ENCODE measurements at regions of chr15 and their contacts with region 1.

Region 1: GRCh38 chr15:80309769-80310384 is 57.9 kb upstream of the CTXND1 start:
- DNase-seq: no peak
- ATAC-seq: peak in 1 of 2 donors; percentile 41

Region 2: DNA sequence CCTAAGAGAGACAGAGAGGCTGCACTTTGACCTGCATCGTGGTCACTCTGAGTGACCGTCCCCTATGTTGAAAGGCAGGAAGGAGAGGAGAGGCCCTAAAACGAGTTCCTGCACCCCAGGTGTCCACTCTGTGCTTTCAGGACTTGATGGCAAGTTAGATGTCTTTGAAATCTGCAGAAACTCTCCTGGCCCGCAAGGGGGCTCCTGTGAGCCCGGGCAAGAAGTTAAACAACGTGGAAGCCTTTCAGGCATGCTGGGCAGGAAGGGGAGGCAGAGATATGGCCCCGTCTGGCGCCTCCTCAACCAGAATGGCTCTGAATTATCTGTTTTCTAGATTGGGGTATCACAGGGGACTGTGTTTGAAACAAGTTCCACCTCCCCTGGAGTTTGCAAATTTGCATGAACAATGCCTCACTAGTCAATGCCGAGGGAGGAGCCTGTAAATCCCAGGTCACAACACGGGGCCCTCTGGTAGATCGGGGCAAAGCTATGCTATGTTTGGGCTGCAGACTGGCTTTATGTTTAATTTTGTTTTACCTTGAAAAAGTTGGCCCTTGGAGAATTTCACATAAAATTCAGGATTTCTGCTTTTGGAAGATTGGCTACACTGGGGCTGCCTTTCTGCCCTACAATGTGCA is 67.6 kb before region 1 on chr15:
- intact Hi-C with region 1: loop called (anchors 2 kb)
- DNase-seq: no peak
- ATAC-seq: peak in 1 of 2 donors; percentile 50